ENCODE measurements at regions of chr20 and their contacts with region 1.

Region 1: GRCh38 chr20:41173161-41173721 is 35.9 kb downstream of the PLCG1 start:
- DNase-seq: no peak
- H3K4me3 ChIP-seq: no peak overlapping the region
- H3K27ac ChIP-seq: peak overlapping the region; percentile 67 to 84 (median 78)
- H3K4me1 ChIP-seq: peaks cover 5 to 81% (median 22%) of the 10 kb centered on the region in 3 donors
- H3K27me3 ChIP-seq: no peaks in the 10 kb centered on the region
- CTCF ChIP-seq: peak; percentile 73 to 97 (median 94)
- POLR2A ChIP-seq: no peak

Region 2: GRCh38 chr20:41046716-41047115 is 126.5 kb before region 1 on chr20:
- intact Hi-C with region 1: no loop called
- DNase-seq: no peak
- H3K4me3 ChIP-seq: no peak overlapping the region
- H3K27ac ChIP-seq: peak overlapping the region in 1 of 4 donors; percentile 12
- H3K4me1 ChIP-seq: peaks cover 48 to 98% (median 63%) of the 10 kb centered on the region in 3 donors
- H3K27me3 ChIP-seq: no peaks in the 10 kb centered on the region
- CTCF ChIP-seq: no peak
- POLR2A ChIP-seq: no peak

Region 3: GRCh38 chr20:41232973-41233926 is 60.0 kb after region 1 on chr20:
- intact Hi-C with region 1: loop called (anchors 5 kb)
- DNase-seq: no peak
- H3K4me3 ChIP-seq: peak overlapping the region in 2 of 4 donors; percentile 35 to 47
- H3K27ac ChIP-seq: peak overlapping the region; percentile 78 to 87 (median 79)
- H3K4me1 ChIP-seq: peaks cover 32 to 51% (median 39%) of the 10 kb centered on the region in 3 donors
- H3K27me3 ChIP-seq: no peaks in the 10 kb centered on the region
- CTCF ChIP-seq: no peak
- POLR2A ChIP-seq: no peak

Region 4: GRCh38 chr20:41411391-41411847 is 238.2 kb after region 1 on chr20:
- intact Hi-C with region 1: loop called (anchors 10 kb)
- DNase-seq: no peak
- H3K4me3 ChIP-seq: peak overlapping the region in 1 of 4 donors; percentile 10
- H3K27ac ChIP-seq: peak overlapping the region; percentile 65 to 86 (median 80)
- H3K4me1 ChIP-seq: peaks cover 4 to 73% (median 19%) of the 10 kb centered on the region in 3 donors
- H3K27me3 ChIP-seq: no peaks in the 10 kb centered on the region
- CTCF ChIP-seq: peak in 5 of 6 experiments; percentile 19 to 59 (median 35)
- POLR2A ChIP-seq: no peak

Region 5: DNA sequence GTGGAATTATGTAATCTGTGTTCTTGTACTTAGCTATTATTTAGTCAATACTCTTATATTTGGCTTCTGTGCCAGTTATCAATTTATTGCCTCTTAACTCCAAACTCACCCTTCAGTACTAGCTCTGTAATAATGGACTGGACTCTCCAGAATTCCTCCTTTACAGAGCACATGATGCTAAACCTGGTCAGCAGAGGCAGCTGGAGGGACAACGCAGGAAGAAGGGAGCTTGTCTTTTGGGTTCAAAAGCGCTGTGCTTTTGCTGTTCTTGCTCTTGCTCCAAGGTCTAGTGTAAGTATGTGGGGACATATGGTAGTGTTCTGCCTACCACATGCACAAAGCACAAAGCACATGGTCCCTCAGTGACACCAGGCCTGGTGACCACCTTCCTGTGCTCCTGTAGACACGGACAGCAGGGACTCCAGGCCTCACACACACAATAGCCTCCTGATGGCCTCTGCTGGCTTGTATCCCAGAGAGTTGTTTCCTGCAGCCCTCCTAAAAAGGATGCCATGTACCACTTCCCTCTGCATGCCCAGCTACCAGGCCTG is 398.8 kb after region 1 on chr20:
- intact Hi-C with region 1: no loop called
- DNase-seq: no peak
- H3K4me3 ChIP-seq: no peak overlapping the region
- H3K27ac ChIP-seq: no peak overlapping the region
- H3K4me1 ChIP-seq: peaks cover 0 to 63% (median 8%) of the 10 kb centered on the region in 3 donors
- H3K27me3 ChIP-seq: no peaks in the 10 kb centered on the region
- CTCF ChIP-seq: no peak
- POLR2A ChIP-seq: no peak